ENCODE measurements at regions of chr19 and their contacts with region 1.

Region 1: GRCh38 chr19:14198384-14199376 is 7.3 kb downstream of the ADGRL1 start:
- DNase-seq: no peak
- CTCF ChIP-seq: peak; percentile 17

Region 2: GRCh38 chr19:14175351-14175792 is 23.3 kb before region 1 on chr19:
- CTCF ChIA-PET with region 1: no interaction called
- POLR2A ChIA-PET with region 1: no interaction called
- DNase-seq: no peak
- CTCF ChIP-seq: no peak

Region 3: DNA sequence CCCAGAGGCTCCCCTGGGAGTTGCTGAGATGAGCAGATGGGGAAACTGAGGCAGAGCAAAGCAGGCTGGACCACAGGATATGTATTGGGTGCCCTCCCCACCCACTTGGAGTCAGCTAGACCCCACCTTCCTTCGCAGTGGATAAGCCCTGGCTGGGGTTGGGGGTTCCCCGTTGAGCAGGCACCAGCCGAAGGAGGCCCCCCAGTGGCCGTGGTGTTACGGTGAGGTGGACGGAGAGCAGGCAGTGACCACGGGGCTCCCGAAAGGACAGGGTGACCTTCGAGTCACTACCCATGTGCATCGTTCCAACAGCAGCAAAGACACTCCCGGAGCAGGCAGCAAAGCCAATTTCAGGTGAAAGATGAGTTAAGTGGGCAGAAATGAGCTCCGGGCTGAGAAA is 120.2 kb after region 1 on chr19:
- CTCF ChIA-PET with region 1: interaction called, 10 read pairs
- POLR2A ChIA-PET with region 1: no interaction called
- DNase-seq: peak; percentile 78
- CTCF ChIP-seq: peak; percentile 63

Measured in GM10248 (cell line).